ENCODE measurements at regions of chr2 and their contacts with region 1.

Region 1: GRCh38 chr2:9843229-9844035 is at the start of gene TAF1B:
- DNase-seq: peak; percentile 94
- H3K4me3 Mint-ChIP-seq: peak within 1 kb of the TSS; percentile 82
- H3K27ac Mint-ChIP-seq: peak within 1 kb of the TSS; percentile 92
- H3K4me1 Mint-ChIP-seq: peaks cover 40% of the 10 kb centered on the region
- H3K27me3 Mint-ChIP-seq: no peaks in the 10 kb centered on the region
- CTCF ChIP-seq: no peak
- total RNA-seq, gene TAF1B: 19.7 and 25.5 TPM in 2 replicates

Region 2: GRCh38 chr2:9820020-9820419 is 23.4 kb before region 1 on chr2:
- CTCF ChIA-PET with region 1: interaction called, 50 read pairs
- POLR2A ChIA-PET with region 1: interaction called, 26 read pairs
- intact Hi-C with region 1: loop called (anchors 1 kb)
- DNase-seq: peak; percentile 90
- H3K4me3 Mint-ChIP-seq: peak overlapping the region; percentile 22
- H3K27ac Mint-ChIP-seq: peak overlapping the region; percentile 90
- H3K4me1 Mint-ChIP-seq: peaks cover 17% of the 10 kb centered on the region
- H3K27me3 Mint-ChIP-seq: no peaks in the 10 kb centered on the region
- CTCF ChIP-seq: no peak

Region 3: GRCh38 chr2:9830690-9831410 is 12.6 kb before region 1 on chr2:
- CTCF ChIA-PET with region 1: interaction called, 8 read pairs
- POLR2A ChIA-PET with region 1: interaction called, 16 read pairs
- intact Hi-C with region 1: no loop called
- DNase-seq: no peak
- H3K4me3 Mint-ChIP-seq: no peak overlapping the region
- H3K27ac Mint-ChIP-seq: no peak overlapping the region
- H3K4me1 Mint-ChIP-seq: no peaks in the 10 kb centered on the region
- H3K27me3 Mint-ChIP-seq: no peaks in the 10 kb centered on the region
- CTCF ChIP-seq: no peak

Region 4: GRCh38 chr2:9914384-9915065 is 71.1 kb after region 1 on chr2:
- CTCF ChIA-PET with region 1: interaction called, 12 read pairs
- POLR2A ChIA-PET with region 1: interaction called, 28 read pairs
- intact Hi-C with region 1: loop called (anchors 1 kb)
- DNase-seq: peak; percentile 92
- H3K4me3 Mint-ChIP-seq: no peak overlapping the region
- H3K27ac Mint-ChIP-seq: peak overlapping the region; percentile 64
- H3K4me1 Mint-ChIP-seq: peaks cover 10% of the 10 kb centered on the region
- H3K27me3 Mint-ChIP-seq: no peaks in the 10 kb centered on the region
- CTCF ChIP-seq: peak; percentile 65